ENCODE measurements at regions of chr17 and their contacts with region 1.

Region 1: DNA sequence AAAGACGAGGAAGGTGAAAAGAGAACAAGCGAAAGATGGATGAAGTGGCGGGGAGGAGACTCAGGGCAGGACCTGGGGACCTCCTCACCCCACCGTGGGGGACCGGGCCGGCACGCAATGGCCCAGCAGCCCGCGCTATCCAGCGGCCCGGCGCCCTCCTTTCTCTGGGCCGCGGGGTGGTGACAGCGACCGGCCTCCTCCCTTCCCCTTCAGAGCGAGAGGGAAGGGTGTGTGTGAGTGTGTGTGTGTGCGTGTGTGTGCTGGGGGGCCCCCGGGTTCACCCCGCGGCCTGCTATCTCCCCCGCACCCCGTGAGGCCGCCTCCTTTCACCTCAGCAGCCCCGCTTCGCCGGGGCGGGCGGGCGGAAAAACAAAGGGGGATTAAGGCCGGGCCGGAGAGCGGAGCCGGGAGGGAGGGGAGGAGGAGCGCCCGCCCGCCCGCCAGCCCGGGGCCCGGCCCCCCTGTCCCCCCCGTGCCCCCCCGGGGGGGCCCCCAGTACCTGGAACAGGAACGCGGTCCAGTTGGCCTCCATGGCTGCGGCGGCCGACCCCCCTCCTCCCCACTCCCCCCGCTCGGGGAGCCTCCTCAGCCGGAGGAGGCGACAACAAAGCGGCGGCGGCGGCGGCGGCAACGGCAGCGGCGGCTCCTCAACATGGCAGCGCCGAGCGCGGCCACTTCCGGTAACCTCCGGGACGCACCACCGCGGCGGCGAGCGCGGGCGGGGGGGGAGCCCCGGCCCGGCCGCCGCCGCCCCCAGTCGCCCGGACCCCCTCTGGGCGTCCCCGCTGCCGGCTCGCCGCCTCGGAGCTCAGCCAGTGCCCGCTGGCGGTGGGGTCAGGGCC is at the start of gene VEZF1:
- DNase-seq: peak; percentile 56 to 75
- ATAC-seq: peak; percentile 62 to 67
- H3K4me3 ChIP-seq: peak within 1 kb of the TSS; percentile 67 to 92 (median 81)
- H3K27ac ChIP-seq: peak within 1 kb of the TSS; percentile 95 to 99 (median 98)
- H3K4me1 ChIP-seq: peaks cover 72 to 83% of the 10 kb centered on the region in 2 donors
- H3K27me3 ChIP-seq: no peaks in the 10 kb centered on the region
- CTCF ChIP-seq: no peak
- POLR2A ChIP-seq: peak; percentile 67 to 87
- total RNA-seq, gene VEZF1: 99.9 to 137 (median 106) TPM

Region 2: DNA sequence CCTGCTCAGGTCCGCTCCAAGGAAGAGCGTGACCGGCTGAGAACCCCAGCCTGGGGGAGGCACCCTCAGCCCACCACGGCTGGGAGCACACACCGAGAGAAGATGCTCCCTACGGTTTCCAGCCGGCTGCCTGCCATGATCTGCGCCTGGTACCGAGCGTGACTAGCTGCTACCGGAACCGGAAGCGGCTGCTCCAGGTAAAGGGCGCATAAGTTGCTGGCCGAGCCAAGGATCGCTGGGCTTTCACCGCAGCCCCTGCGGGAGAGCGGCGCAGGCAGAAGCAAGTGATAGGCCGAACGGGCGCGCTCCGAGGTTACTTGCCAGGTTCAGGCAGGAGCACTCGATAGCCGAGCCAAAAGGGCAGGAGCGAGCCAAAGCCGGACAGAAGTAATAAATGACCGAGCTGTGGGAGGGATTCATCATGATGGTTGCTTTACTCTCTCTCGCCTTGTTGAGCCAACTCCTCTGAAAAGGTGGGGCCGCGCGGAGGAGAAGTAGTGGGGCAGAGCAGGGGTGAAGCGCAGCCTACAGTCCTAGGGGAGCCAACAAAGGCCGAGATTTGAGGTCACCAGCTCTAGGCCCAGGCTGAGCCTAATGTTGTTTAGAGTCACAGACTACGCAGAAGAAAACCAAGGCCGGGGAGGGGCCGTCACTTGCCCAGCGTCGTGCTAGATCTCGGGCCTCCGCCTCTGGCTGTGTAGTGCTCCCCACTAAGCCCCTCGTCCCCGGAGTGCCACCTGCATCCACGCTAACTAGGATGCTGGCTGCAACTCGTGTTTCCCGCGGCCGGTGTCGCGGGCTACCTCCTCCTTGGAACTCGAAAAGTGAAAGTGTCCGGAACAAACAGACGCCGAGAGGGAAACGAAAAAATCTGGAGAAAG is 137.7 kb before region 1 on chr17 and contains the start of gene MRPS23:
- in situ Hi-C with region 1: no loop called
- intact Hi-C with region 1: loop called (anchors 2 kb)
- DNase-seq: peak; percentile 98 to 99
- ATAC-seq: peak; percentile 63 to 72
- H3K4me3 ChIP-seq: peak within 1 kb of the TSS; percentile 82 to 98 (median 88)
- H3K27ac ChIP-seq: peak within 1 kb of the TSS; percentile 91 to 98 (median 96)
- H3K4me1 ChIP-seq: peaks cover 52% of the 10 kb centered on the region in 2 donors
- H3K27me3 ChIP-seq: no peaks in the 10 kb centered on the region
- CTCF ChIP-seq: peak in 1 of 5 experiments; percentile 9
- POLR2A ChIP-seq: peak; percentile 83 to 87
- total RNA-seq, gene MRPS23: 24.3 to 47.2 (median 35.5) TPM

Region 3: DNA sequence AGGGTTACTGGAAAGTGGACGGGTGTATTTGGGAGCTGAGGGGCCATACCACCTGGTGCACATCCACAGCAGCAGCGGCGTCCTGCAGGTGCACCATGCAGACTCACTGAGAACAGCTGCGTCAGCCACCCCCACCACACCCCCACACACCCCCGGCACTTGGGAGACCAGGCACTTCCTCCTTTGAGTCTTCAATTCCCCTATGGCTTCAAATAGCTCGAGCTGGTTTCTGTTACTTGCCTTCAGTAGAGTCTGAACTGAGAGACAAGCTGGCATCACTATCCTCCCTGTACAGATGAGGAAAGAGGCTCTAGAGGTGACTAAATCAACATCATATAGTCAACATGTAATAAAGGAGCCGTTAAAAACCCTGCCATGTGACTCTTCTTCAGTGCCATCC is 48.0 kb before region 1 on chr17:
- in situ Hi-C with region 1: no loop called
- intact Hi-C with region 1: loop called (anchors 2 kb)
- DNase-seq: peak in 1 of 2 donors; percentile 40
- ATAC-seq: peak; percentile 26 to 43
- H3K4me3 ChIP-seq: peak overlapping the region in 2 of 4 donors; percentile 1 to 13
- H3K27ac ChIP-seq: peak overlapping the region; percentile 85 to 94 (median 90)
- H3K4me1 ChIP-seq: peaks cover 88 to 90% of the 10 kb centered on the region in 2 donors
- H3K27me3 ChIP-seq: no peaks in the 10 kb centered on the region
- CTCF ChIP-seq: no peak
- POLR2A ChIP-seq: no peak

Region 4: GRCh38 chr17:57955183-57955931 is 32.4 kb before region 1 on chr17 and contains the start of gene CUEDC1:
- in situ Hi-C with region 1: no loop called
- intact Hi-C with region 1: loop called (anchors 2 kb)
- DNase-seq: peak; percentile 72 to 79
- ATAC-seq: peak; percentile 69 to 76
- H3K4me3 ChIP-seq: peak within 1 kb of the TSS; percentile 64 to 88 (median 78)
- H3K27ac ChIP-seq: peak within 1 kb of the TSS; percentile 82 to 99 (median 98)
- H3K4me1 ChIP-seq: peaks cover 54 to 58% of the 10 kb centered on the region in 2 donors
- H3K27me3 ChIP-seq: no peaks in the 10 kb centered on the region
- CTCF ChIP-seq: peak in 4 of 5 experiments; percentile 34 to 64 (median 38)
- POLR2A ChIP-seq: peak in 1 of 2 donors; percentile 50
- total RNA-seq, gene CUEDC1: 31.2 to 43.9 (median 34.3) TPM

Region 5: GRCh38 chr17:58006924-58007780 is 19.4 kb after region 1 on chr17 and contains the start of gene SRSF1:
- in situ Hi-C with region 1: no loop called
- intact Hi-C with region 1: loop called (anchors 2 kb)
- DNase-seq: peak; percentile 95 to 96
- ATAC-seq: peak; percentile 90 to 93
- H3K4me3 ChIP-seq: peak within 1 kb of the TSS; percentile 91 to 98 (median 97)
- H3K27ac ChIP-seq: peak within 1 kb of the TSS; percentile 96 to 100 (median 100)
- H3K4me1 ChIP-seq: peaks cover 47 to 48% of the 10 kb centered on the region in 2 donors
- H3K27me3 ChIP-seq: no peaks in the 10 kb centered on the region
- CTCF ChIP-seq: peak in 1 of 5 experiments; percentile 25
- POLR2A ChIP-seq: peak; percentile 97 to 98
- total RNA-seq, gene SRSF1: 69.4 to 85.4 (median 82.2) TPM

Measured in gastrocnemius medialis (tissue), 4 donors.